Endothelial cell of umbilical vein (primary cell): ENCODE measurements at regions of chr17 and their contacts with region 1.

Region 1: DNA sequence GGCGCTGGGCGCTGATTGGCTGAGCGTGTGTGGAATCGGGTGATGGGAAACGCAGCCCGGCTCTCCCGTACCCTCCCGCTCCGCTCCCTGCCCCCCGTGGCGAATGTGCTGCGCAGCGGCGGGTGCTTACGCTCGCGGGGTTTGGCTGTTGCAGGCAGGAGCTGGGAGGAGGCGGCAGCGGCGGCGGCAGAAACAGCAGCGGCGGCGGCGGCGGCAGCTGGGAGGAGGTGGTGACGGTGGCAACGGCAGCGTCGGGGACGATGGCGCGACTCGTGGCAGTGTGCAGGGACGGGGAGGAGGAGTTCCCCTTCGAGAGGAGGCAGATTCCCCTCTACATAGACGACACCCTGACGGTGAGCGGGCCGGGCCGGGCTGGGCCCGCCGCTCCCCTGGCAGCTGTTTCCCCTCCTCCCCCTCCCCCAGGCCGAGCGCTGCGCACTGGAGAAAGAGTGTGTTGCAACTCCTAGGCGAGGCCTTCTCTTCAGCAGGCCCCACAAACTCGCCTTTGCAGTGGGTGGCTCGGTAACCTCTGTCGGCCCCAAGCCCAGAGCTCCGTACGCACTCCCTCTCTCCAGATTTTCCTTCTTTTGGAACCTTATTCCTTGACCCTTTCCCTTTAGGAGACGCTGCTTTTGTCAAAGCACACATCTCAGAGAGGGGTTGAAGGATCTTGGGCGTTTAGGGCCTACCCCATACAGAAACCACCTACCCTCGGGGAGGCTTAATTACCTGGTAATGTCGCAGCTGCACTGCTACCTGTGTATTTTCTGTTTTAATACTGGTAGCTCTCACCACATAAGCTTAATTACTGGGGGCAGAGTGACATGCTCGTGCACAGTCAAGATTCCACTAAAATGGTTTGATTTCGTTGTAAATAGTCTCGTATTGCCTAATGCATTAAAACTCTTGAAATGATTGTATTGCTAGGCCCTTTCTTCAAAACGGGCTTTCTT is 1.0 kb downstream of the GGNBP2 start:
- DNase-seq: peak; percentile 96
- H3K4me3 ChIP-seq: peak overlapping the region; percentile 11 to 99 (median 78)
- H3K27ac ChIP-seq: peak overlapping the region; percentile 59
- H3K4me1 ChIP-seq: peaks cover 20% of the 10 kb centered on the region
- H3K27me3 ChIP-seq: no peaks in the 10 kb centered on the region
- CTCF ChIP-seq: peak in 1 of 2 donors; percentile 3
- POLR2A ChIP-seq: peak; percentile 13

Region 2: GRCh38 chr17:36534840-36535668 is 10.7 kb before region 1 on chr17 and contains the starts of genes MYO19 and PIGW:
- CTCF ChIA-PET with region 1: interaction called, 31 read pairs
- POLR2A ChIA-PET with region 1: interaction called, 6 read pairs
- dilution Hi-C with region 1: no loop called
- intact Hi-C with region 1: loop called (anchors 1 kb)
- DNase-seq: peak; percentile 90
- H3K4me3 ChIP-seq: peak within 1 kb of the TSS; percentile 63 to 84 (median 70)
- H3K27ac ChIP-seq: peak within 1 kb of the TSS; percentile 84
- H3K4me1 ChIP-seq: peaks cover 8% of the 10 kb centered on the region
- H3K27me3 ChIP-seq: no peaks in the 10 kb centered on the region
- CTCF ChIP-seq: no peak
- POLR2A ChIP-seq: peak; percentile 94
- total RNA-seq, gene MYO19: 90.3 and 95.7 TPM in 2 replicates
- total RNA-seq, gene PIGW: 13.1 and 16.3 TPM in 2 replicates

Region 3: GRCh38 chr17:36591434-36592315 is 45.9 kb after region 1 on chr17 and contains the start of gene DHRS11:
- CTCF ChIA-PET with region 1: interaction called, 3 read pairs
- POLR2A ChIA-PET with region 1: no interaction called
- dilution Hi-C with region 1: no loop called
- intact Hi-C with region 1: loop called (anchors 1 kb)
- DNase-seq: peak; percentile 80
- H3K4me3 ChIP-seq: peak within 1 kb of the TSS; percentile 63 to 84 (median 83)
- H3K27ac ChIP-seq: peak within 1 kb of the TSS; percentile 50
- H3K4me1 ChIP-seq: peaks cover 7% of the 10 kb centered on the region
- H3K27me3 ChIP-seq: no peaks in the 10 kb centered on the region
- CTCF ChIP-seq: no peak
- POLR2A ChIP-seq: no peak
- total RNA-seq, gene DHRS11: 9.8 and 11.3 TPM in 2 replicates